Naive thymus-derived CD4-positive, alpha-beta T cell (primary cell): ENCODE measurements at regions of chr4 and their contacts with region 1.

Region 1: GRCh38 chr4:1579901-1580691 is 104.0 kb downstream of the FAM53A start:
- DNase-seq: peak; percentile 85 to 97 (median 93)
- ATAC-seq: peak; percentile 90
- H3K4me3 ChIP-seq: peak overlapping the region; percentile 70
- H3K4me3 Mint-ChIP-seq: peak overlapping the region; percentile 73 to 87 (median 80)
- H3K27ac ChIP-seq: peak overlapping the region; percentile 73
- H3K27ac Mint-ChIP-seq: peak overlapping the region; percentile 18 to 79 (median 55)
- H3K4me1 ChIP-seq: peaks cover 0 to 5% of the 10 kb centered on the region in 2 donors
- H3K4me1 Mint-ChIP-seq: peaks cover 0 to 14% (median 10%) of the 10 kb centered on the region in 7 donors
- H3K27me3 ChIP-seq: no peaks in the 10 kb centered on the region
- H3K27me3 Mint-ChIP-seq: no peaks in the 10 kb centered on the region

Region 2: DNA sequence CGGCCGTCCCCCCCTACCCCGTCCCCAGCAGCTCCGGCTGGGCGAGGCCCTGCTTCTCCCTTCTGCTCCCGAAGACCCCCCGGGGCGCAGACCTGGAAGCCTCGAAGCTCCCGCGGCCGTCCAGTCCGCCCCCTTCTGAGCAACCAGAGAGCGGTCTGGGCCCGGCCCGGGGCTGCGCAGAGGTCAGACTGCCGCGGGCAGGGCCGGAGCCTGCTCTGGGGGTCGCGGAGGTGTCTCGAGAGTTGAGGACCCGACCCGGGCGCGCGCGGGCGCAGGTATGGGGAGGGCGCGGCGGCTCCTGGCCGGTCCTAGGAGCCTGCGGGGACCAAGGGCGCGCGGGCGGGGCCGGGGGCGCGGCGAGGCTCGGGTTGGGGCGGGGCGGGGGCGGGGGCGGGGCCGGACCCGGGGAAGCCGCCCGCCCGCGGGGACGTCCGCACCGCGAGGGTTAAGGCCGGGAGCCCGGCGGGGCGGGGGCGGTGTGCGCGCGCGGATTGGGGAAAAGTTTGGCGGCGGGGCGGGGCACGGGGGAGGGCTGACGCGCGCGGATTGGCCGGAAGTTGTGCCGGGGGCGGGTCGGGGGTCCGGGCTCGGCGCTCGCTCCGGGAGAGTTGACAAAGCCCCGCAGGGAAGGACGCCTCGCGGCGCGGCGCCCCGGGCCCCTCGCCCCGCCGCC is 568.9 kb before region 1 on chr4 and contains the start of gene FGFRL1:
- CTCF ChIA-PET with region 1: no interaction called
- POLR2A ChIA-PET with region 1: no interaction called
- intact Hi-C with region 1: loop called in 1 of 2 experiments (anchors 1 kb)
- DNase-seq: peak; percentile 78 to 95 (median 87)
- ATAC-seq: peak; percentile 78
- H3K4me3 ChIP-seq: peak within 1 kb of the TSS; percentile 77
- H3K4me3 Mint-ChIP-seq: peak within 1 kb of the TSS; percentile 86 to 97 (median 89)
- H3K27ac ChIP-seq: peak within 1 kb of the TSS; percentile 83
- H3K27ac Mint-ChIP-seq: peak within 1 kb of the TSS; percentile 76 to 96 (median 92)
- H3K4me1 ChIP-seq: peaks cover 0 to 10% of the 10 kb centered on the region in 2 donors
- H3K4me1 Mint-ChIP-seq: peaks cover 15 to 21% (median 18%) of the 10 kb centered on the region in 7 donors
- H3K27me3 ChIP-seq: no peaks in the 10 kb centered on the region
- H3K27me3 Mint-ChIP-seq: peaks cover 24 to 31% (median 27%) of the 10 kb centered on the region in 5 donors
- total RNA-seq, gene FGFRL1: 10.6 to 28.1 (median 22.0) TPM

Region 3: GRCh38 chr4:1683736-1684505 is 103.8 kb after region 1 on chr4 and contains the start of gene FAM53A:
- CTCF ChIA-PET with region 1: no interaction called
- POLR2A ChIA-PET with region 1: no interaction called
- intact Hi-C with region 1: loop called (anchors 1 to 2 kb)
- DNase-seq: peak in 5 of 9 donors; percentile 23 to 99 (median 88)
- ATAC-seq: peak; percentile 98
- H3K4me3 ChIP-seq: peak within 1 kb of the TSS; percentile 51
- H3K4me3 Mint-ChIP-seq: peak within 1 kb of the TSS; percentile 86 to 97 (median 93)
- H3K27ac ChIP-seq: peak within 1 kb of the TSS; percentile 62
- H3K27ac Mint-ChIP-seq: peak within 1 kb of the TSS; percentile 86 to 98 (median 91)
- H3K4me1 ChIP-seq: peaks cover 0 to 4% of the 10 kb centered on the region in 2 donors
- H3K4me1 Mint-ChIP-seq: peaks cover 9 to 15% (median 12%) of the 10 kb centered on the region in 7 donors
- H3K27me3 ChIP-seq: no peaks in the 10 kb centered on the region
- H3K27me3 Mint-ChIP-seq: peaks cover 0 to 9% (median 0%) of the 10 kb centered on the region in 5 donors
- total RNA-seq, gene FAM53A: 1.2 to 3.6 (median 1.4) TPM

Region 4: DNA sequence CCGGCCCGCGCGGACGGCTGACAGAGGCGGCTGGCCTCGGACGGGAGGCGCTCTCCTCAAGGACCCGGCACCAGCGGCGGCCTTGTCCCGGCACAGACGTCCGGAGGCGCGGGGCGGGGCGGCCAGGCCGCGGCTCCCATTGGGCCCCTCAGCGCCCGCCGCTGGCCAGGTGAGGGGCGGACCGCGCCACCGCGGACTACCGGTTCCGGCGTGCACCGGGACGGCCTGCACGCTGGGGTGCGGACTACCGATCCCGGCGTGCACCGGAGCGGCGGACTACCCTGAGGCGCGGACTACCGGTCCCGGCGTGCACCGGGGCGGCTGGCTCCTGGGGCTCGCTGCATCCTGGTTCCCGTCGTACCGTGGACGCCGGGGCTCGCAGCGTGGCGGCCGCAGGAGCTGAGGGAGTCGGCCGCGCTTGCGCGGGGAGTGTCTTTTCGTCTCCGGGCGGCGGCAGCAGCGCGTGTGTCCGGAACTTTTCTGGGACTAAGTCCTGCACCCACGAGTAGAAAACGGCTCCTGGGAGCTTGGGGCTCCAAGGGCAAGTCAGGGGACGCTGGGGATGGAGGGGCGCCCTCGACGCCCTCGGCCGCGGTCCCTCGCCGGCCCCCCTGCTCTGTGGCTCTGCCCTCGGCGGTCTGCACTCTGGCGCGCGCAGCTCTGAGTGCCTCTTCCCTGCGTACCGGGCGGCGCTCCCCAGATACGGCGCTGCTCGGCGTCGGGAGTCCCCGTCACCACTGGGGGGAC is 276.1 kb after region 1 on chr4 and contains the start of gene LETM1:
- CTCF ChIA-PET with region 1: no interaction called
- POLR2A ChIA-PET with region 1: no interaction called
- intact Hi-C with region 1: loop called in 1 of 2 experiments (anchors 2 kb)
- DNase-seq: peak; percentile 79 to 96 (median 88)
- ATAC-seq: peak; percentile 98
- H3K4me3 ChIP-seq: peak within 1 kb of the TSS; percentile 86
- H3K4me3 Mint-ChIP-seq: peak within 1 kb of the TSS; percentile 67 to 88 (median 83)
- H3K27ac ChIP-seq: peak within 1 kb of the TSS; percentile 70
- H3K27ac Mint-ChIP-seq: peak within 1 kb of the TSS in 8 of 9 donors; percentile 17 to 80 (median 48)
- H3K4me1 ChIP-seq: peaks cover 10 to 14% of the 10 kb centered on the region in 2 donors
- H3K4me1 Mint-ChIP-seq: peaks cover 31 to 45% (median 41%) of the 10 kb centered on the region in 7 donors
- H3K27me3 ChIP-seq: no peaks in the 10 kb centered on the region
- H3K27me3 Mint-ChIP-seq: no peaks in the 10 kb centered on the region
- total RNA-seq, gene LETM1: 29.5 to 56.4 (median 36.0) TPM